T-cell (primary cell): ENCODE measurements at regions of chr12 and their contacts with region 1.

Region 1: DNA sequence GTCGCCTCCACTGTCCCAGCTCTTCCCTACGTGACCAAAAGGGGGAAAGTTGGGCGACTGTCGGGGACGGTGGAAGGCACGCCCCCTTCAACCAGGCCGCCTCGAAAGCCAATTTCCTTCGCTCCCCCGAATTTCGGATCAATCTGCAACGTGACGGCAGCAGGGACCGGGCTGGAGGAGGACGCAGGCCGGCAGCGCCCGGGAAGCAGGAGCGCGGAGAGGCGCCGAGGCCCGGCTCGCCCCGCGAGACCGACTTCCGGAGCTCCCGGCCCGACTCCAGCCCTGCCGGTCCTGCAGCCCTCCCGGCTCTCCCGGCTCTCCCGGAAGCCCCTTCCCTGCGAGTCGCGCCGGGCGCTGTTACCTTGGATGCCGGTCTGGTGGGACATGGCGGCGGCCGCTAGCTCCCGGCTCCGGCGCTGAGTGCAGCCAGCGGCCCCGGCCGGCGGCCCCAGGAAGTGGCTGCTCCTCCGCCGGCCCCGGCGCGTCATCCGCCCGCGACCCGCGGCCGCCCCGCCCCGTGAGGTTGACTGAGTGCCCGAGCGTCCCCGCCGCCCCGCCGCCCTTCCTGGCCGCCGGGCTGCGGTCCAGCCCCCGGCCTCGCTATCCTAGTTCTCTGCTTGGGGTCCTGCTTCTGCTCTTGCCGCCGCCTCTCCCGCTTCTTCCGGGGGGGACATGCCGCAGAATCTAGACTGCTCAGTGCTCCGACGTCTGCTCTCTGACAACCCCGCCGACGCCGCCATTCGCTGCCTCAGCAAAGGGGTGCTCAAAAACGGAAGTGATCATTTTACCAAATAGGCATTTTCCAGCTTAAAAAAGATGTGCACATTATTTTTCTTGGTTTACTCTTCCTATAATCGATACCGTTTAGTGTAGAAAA is at the start of gene TWF1:
- DNase-seq: peak; percentile 62 to 89 (median 78)
- ATAC-seq: peak; percentile 91 to 93 (median 92)
- H3K4me3 ChIP-seq: peak within 1 kb of the TSS; percentile 89 to 91
- H3K4me3 Mint-ChIP-seq: peak within 1 kb of the TSS; percentile 93 to 100 (median 100)
- H3K27ac ChIP-seq: peak within 1 kb of the TSS; percentile 91
- H3K27ac Mint-ChIP-seq: peak within 1 kb of the TSS; percentile 100
- H3K4me1 ChIP-seq: peaks cover 0 to 26% of the 10 kb centered on the region in 2 experiments
- H3K4me1 Mint-ChIP-seq: peaks cover 36 to 58% (median 44%) of the 10 kb centered on the region in 3 donors
- H3K27me3 ChIP-seq: no peaks in the 10 kb centered on the region
- H3K27me3 Mint-ChIP-seq: no peaks in the 10 kb centered on the region
- total RNA-seq, gene TWF1: 23.4 to 53.3 (median 29.4) TPM

Region 2: DNA sequence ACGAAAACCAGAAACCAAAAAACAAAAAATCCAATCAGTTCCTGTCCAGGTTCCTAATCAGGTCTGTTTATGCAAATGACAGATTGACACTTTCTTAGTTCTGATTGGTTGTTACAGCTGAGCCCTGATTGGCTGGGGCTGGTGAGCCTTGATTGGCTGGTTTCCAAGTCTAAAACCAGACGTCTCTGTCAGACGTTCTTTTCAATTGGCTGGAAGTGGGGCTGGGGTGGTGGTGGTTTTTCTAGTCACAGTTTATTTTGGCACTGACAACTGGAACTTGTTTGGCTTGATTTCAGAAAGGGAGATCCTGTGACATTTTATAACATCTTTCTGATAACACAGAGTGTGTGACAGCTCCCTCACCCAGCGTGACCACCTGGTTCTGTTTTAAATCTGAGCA is 1180.5 kb before region 1 on chr12:
- CTCF ChIA-PET with region 1: no interaction called
- POLR2A ChIA-PET with region 1: no interaction called
- DNase-seq: no peak
- ATAC-seq: no peak
- H3K4me3 ChIP-seq: no peak overlapping the region
- H3K4me3 Mint-ChIP-seq: no peak overlapping the region
- H3K27ac ChIP-seq: no peak overlapping the region
- H3K27ac Mint-ChIP-seq: no peak overlapping the region
- H3K4me1 ChIP-seq: no peaks in the 10 kb centered on the region
- H3K4me1 Mint-ChIP-seq: no peaks in the 10 kb centered on the region
- H3K27me3 ChIP-seq: no peaks in the 10 kb centered on the region
- H3K27me3 Mint-ChIP-seq: peaks cover 0 to 7% of the 10 kb centered on the region in 2 donors

Region 3: DNA sequence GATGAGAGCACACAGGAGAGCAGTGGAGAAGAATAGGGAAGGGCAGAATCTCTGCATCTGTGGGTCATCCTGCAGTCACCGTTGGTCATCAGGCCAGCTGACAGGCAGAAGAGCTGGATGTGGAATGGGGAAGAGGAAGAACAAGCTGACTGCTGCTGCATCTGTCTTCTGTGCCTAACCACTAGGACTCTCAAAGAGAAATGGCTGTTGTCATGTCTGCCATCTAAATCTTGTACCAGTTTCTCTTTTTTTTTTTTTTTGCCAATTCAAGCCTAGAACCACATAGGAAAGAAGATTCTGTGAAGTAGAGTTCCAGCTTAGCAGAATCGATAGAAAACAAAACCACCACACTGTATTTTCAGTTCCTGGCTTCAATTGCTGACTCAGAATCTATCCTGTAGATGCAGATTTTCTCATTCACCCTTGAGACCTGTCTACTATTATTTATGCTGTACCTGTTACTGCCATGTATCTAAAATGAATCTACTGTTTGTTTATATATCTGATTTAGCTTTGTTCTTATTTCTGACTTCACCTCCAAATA is 794.6 kb before region 1 on chr12:
- CTCF ChIA-PET with region 1: no interaction called
- POLR2A ChIA-PET with region 1: no interaction called
- DNase-seq: no peak
- ATAC-seq: no peak
- H3K4me3 ChIP-seq: no peak overlapping the region
- H3K4me3 Mint-ChIP-seq: no peak overlapping the region
- H3K27ac ChIP-seq: no peak overlapping the region
- H3K27ac Mint-ChIP-seq: no peak overlapping the region
- H3K4me1 ChIP-seq: no peaks in the 10 kb centered on the region
- H3K4me1 Mint-ChIP-seq: no peaks in the 10 kb centered on the region
- H3K27me3 ChIP-seq: no peaks in the 10 kb centered on the region
- H3K27me3 Mint-ChIP-seq: peaks cover 0 to 1% of the 10 kb centered on the region in 2 donors

Region 4: GRCh38 chr12:43758728-43759563 is 47.2 kb before region 1 on chr12 and contains the starts of genes IRAK4 and PUS7L:
- CTCF ChIA-PET with region 1: interaction called in 1 of 2 experiments, 4 read pairs
- POLR2A ChIA-PET with region 1: interaction called, 6 to 17 read pairs
- DNase-seq: peak; percentile 87 to 98 (median 94)
- ATAC-seq: peak; percentile 94 to 99 (median 96)
- H3K4me3 ChIP-seq: peak within 1 kb of the TSS; percentile 64 to 93
- H3K4me3 Mint-ChIP-seq: peak within 1 kb of the TSS; percentile 97 to 98 (median 98)
- H3K27ac ChIP-seq: peak within 1 kb of the TSS; percentile 98
- H3K27ac Mint-ChIP-seq: peak within 1 kb of the TSS; percentile 99
- H3K4me1 ChIP-seq: peaks cover 27 to 32% of the 10 kb centered on the region in 2 experiments
- H3K4me1 Mint-ChIP-seq: peaks cover 83 to 86% (median 84%) of the 10 kb centered on the region in 3 donors
- H3K27me3 ChIP-seq: no peaks in the 10 kb centered on the region
- H3K27me3 Mint-ChIP-seq: no peaks in the 10 kb centered on the region
- total RNA-seq, gene IRAK4: 48.7 to 55.8 (median 49.8) TPM
- total RNA-seq, gene PUS7L: 17.5 to 24.9 (median 19.2) TPM

Region 5: GRCh38 chr12:43835656-43836474 is 29.8 kb after region 1 on chr12 and contains the start of gene TMEM117:
- CTCF ChIA-PET with region 1: interaction called, 3 to 9 read pairs
- POLR2A ChIA-PET with region 1: interaction called, 3 to 15 read pairs
- DNase-seq: peak; percentile 12 to 69 (median 52)
- ATAC-seq: peak; percentile 79 to 83 (median 80)
- H3K4me3 ChIP-seq: peak within 1 kb of the TSS; percentile 58 to 74
- H3K4me3 Mint-ChIP-seq: peak within 1 kb of the TSS; percentile 76 to 88 (median 79)
- H3K27ac ChIP-seq: peak within 1 kb of the TSS; percentile 78
- H3K27ac Mint-ChIP-seq: peak within 1 kb of the TSS; percentile 81 to 85
- H3K4me1 ChIP-seq: peaks cover 10 to 22% of the 10 kb centered on the region in 2 experiments
- H3K4me1 Mint-ChIP-seq: peaks cover 48 to 62% (median 49%) of the 10 kb centered on the region in 3 donors
- H3K27me3 ChIP-seq: no peaks in the 10 kb centered on the region
- H3K27me3 Mint-ChIP-seq: no peaks in the 10 kb centered on the region
- total RNA-seq, gene TMEM117: 3.3 to 4.4 (median 3.9) TPM

Region 6: GRCh38 chr12:43882578-43883178 is 76.6 kb after region 1 on chr12:
- CTCF ChIA-PET with region 1: interaction called in 1 of 2 experiments, 30 read pairs
- POLR2A ChIA-PET with region 1: interaction called in 1 of 2 experiments, 3 read pairs
- DNase-seq: peak in 26 of 35 experiments; percentile 2 to 74 (median 16)
- ATAC-seq: peak; percentile 70 to 77 (median 74)
- H3K4me3 ChIP-seq: no peak overlapping the region
- H3K4me3 Mint-ChIP-seq: no peak overlapping the region
- H3K27ac ChIP-seq: no peak overlapping the region
- H3K27ac Mint-ChIP-seq: no peak overlapping the region
- H3K4me1 ChIP-seq: no peaks in the 10 kb centered on the region
- H3K4me1 Mint-ChIP-seq: no peaks in the 10 kb centered on the region
- H3K27me3 ChIP-seq: no peaks in the 10 kb centered on the region
- H3K27me3 Mint-ChIP-seq: no peaks in the 10 kb centered on the region

Region 7: DNA sequence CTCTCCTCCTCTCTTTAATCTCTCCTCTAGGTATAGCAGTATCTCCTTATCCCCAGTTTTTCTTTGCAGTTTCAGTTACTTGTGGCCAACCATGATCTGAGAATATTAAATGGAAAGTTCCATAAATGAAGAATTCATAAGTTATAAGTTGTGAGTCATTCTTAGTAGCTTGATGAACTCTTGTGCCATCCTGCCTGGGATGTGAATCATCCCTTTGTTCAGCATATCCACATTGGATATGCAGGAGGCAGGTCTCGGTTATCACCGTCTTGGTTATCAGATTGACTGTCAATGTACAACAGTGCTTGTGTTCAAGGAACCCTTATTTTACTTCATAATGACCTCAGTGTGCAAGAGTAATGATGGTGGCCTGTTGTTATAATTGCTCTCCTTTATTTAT is 163.8 kb after region 1 on chr12:
- CTCF ChIA-PET with region 1: no interaction called
- POLR2A ChIA-PET with region 1: no interaction called
- DNase-seq: no peak
- ATAC-seq: no peak
- H3K4me3 ChIP-seq: no peak overlapping the region
- H3K4me3 Mint-ChIP-seq: no peak overlapping the region
- H3K27ac ChIP-seq: no peak overlapping the region
- H3K27ac Mint-ChIP-seq: no peak overlapping the region
- H3K4me1 ChIP-seq: no peaks in the 10 kb centered on the region
- H3K4me1 Mint-ChIP-seq: no peaks in the 10 kb centered on the region
- H3K27me3 ChIP-seq: no peaks in the 10 kb centered on the region
- H3K27me3 Mint-ChIP-seq: no peaks in the 10 kb centered on the region